CD14-positive monocyte (primary cell): ENCODE measurements at regions of chr9 and their contacts with region 1.

Region 1: GRCh38 chr9:125189361-125190289 is at the start of gene PPP6C:
- DNase-seq: peak; percentile 96 to 97 (median 97)
- H3K4me3 ChIP-seq: peak within 1 kb of the TSS; percentile 66 to 97 (median 94)
- H3K4me3 Mint-ChIP-seq: peak within 1 kb of the TSS; percentile 94 to 95
- H3K27ac ChIP-seq: peak within 1 kb of the TSS; percentile 88 to 95
- H3K27ac Mint-ChIP-seq: peak within 1 kb of the TSS; percentile 86 to 95 (median 93)
- H3K4me1 ChIP-seq: peaks cover 23 to 34% of the 10 kb centered on the region in 2 donors
- H3K4me1 Mint-ChIP-seq: peaks cover 29% of the 10 kb centered on the region
- H3K27me3 ChIP-seq: no peaks in the 10 kb centered on the region
- H3K27me3 Mint-ChIP-seq: no peaks in the 10 kb centered on the region
- CTCF ChIP-seq: peak; percentile 63
- polyA plus RNA-seq, gene PPP6C: 20.0 to 48.1 (median 36.9) TPM

Region 2: DNA sequence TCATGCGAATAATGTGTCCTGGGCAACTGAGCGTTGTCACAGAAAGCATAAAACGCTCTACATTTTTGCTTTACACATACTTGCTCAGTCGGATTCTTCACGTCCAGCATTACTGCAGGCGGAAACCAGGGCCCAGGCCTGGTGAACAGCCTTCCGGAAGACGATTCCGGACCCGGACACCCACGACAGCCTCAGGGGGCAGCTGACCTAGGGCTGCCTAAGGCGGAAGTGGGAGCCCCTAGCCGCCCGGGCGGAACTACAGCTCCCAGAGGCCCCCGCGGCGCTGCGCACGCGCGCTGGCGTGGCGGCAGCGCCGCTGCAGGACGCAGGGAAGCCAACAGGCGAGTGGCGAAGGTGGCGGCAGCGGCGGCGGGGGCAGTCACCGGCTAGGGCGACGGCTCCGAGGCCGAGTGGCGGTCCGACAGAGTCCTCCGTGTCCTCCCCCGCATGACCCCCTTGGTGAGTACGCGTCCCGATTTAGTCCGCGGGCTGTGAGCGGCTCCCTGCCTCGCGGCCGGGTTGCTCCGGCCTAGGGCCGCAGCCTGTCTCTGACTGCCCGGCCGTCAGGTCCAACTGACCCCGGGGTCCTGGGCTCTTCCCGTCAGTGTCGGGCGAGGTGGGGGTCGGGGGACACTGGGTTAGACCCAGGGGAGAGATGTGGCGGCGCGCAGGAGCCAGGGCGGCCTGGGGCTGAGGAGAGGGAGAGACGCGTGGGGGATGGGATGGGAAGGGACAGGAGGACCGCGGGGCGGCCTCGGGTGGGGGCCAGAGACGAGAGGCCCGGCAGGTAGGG is 72.1 kb after region 1 on chr9 and contains the start of gene GAPVD1:
- intact Hi-C with region 1: loop called (anchors 5 to 10 kb)
- DNase-seq: peak; percentile 91 to 94 (median 93)
- H3K4me3 ChIP-seq: peak within 1 kb of the TSS; percentile 83 to 97 (median 90)
- H3K4me3 Mint-ChIP-seq: peak within 1 kb of the TSS; percentile 97 to 98
- H3K27ac ChIP-seq: peak within 1 kb of the TSS; percentile 95 to 98
- H3K27ac Mint-ChIP-seq: peak within 1 kb of the TSS; percentile 98 to 99 (median 99)
- H3K4me1 ChIP-seq: peaks cover 49 to 53% of the 10 kb centered on the region in 2 donors
- H3K4me1 Mint-ChIP-seq: peaks cover 69% of the 10 kb centered on the region
- H3K27me3 ChIP-seq: no peaks in the 10 kb centered on the region
- H3K27me3 Mint-ChIP-seq: peaks cover 0 to 2% (median 0%) of the 10 kb centered on the region in 3 donors
- CTCF ChIP-seq: peak; percentile 58
- polyA plus RNA-seq, gene GAPVD1: 18.7 to 49.2 (median 30.5) TPM